Activated CD4-positive, alpha-beta T cell treated with anti-CD3 and anti-CD28 coated beads, Interleukin-2, amount 10 ng/mL, durations not matched to agents 24 days and 14 days (primary cell): ENCODE measurements at regions of chr2 and their contacts with region 1.

Region 1: DNA sequence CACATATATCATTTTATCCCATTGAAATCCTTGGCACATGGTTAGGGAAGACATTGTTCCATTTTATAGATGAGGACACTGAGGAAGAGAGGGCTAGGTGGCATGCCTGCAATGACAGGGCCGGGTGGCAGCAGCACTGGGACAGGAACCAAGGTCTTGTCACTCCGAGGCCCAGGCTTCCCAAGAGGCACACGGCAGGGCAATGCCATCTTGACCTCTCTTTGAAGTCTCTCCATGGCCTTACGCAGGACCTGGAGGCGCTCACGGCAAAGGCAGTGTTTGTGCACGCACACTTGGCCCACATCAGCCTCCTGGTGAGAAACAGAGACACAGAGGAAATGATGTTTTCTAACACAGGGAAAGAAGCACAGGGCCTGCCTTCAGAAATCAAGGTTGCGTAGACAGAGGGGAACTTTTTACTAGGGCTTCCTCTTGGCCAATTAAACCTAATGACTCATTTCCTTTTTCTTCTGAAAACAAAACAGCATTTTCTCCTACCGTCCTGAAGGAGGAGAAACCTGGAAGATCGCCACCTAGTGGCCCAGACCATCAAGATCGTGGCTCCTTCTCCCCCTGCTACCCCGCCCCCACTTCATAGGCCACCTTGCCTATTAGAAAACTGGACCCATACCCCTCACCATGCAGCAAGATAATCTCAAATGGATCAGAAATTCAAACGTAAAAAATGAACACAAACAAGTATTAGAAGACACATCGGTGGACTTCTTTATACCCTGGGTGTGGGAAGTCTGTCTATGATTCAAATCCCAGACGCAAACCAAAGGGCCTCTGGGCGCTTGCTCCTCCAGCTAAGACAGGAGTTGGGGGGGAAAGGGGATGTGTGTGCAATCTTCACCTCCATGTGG is 74.6 kb upstream of the SP3 start:
- DNase-seq: peak; percentile 94
- H3K4me3 Mint-ChIP-seq: peak overlapping the region; percentile 62
- H3K27ac Mint-ChIP-seq: peak overlapping the region; percentile 95
- H3K4me1 Mint-ChIP-seq: peaks cover 13% of the 10 kb centered on the region
- H3K27me3 Mint-ChIP-seq: no peaks in the 10 kb centered on the region

Region 2: GRCh38 chr2:173402405-173402974 is 637.3 kb before region 1 on chr2:
- intact Hi-C with region 1: loop called (anchors 2 kb)
- DNase-seq: peak; percentile 92
- H3K4me3 Mint-ChIP-seq: no peak overlapping the region
- H3K27ac Mint-ChIP-seq: no peak overlapping the region
- H3K4me1 Mint-ChIP-seq: peaks cover 5% of the 10 kb centered on the region
- H3K27me3 Mint-ChIP-seq: peaks cover 58% of the 10 kb centered on the region

Region 3: DNA sequence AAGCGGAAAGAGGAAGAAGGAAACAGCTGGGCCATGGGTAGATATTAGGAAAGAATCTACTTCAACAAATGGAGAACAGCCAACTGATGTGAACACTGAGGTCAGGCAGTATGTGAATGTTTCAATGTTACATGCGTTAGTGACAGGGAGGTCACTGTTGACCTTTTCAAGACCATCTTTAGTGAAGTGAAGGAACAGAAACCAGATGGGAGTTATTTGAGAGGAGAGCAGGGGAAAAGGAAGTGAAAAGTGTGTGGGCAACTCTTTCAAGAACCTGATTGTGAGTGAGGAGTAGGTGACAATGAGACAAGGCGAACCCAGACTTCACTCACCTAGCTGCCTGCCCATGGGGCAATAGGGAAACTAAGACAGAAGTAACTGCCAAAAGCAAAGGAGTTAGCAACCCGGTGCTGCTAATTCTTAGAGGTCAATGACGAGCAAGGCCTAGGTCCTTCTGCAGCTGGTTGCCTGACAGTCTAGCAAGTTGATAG is 141.6 kb before region 1 on chr2:
- intact Hi-C with region 1: loop called (anchors 10 kb)
- DNase-seq: no peak
- H3K4me3 Mint-ChIP-seq: no peak overlapping the region
- H3K27ac Mint-ChIP-seq: no peak overlapping the region
- H3K4me1 Mint-ChIP-seq: peaks cover 15% of the 10 kb centered on the region
- H3K27me3 Mint-ChIP-seq: no peaks in the 10 kb centered on the region

Region 4: DNA sequence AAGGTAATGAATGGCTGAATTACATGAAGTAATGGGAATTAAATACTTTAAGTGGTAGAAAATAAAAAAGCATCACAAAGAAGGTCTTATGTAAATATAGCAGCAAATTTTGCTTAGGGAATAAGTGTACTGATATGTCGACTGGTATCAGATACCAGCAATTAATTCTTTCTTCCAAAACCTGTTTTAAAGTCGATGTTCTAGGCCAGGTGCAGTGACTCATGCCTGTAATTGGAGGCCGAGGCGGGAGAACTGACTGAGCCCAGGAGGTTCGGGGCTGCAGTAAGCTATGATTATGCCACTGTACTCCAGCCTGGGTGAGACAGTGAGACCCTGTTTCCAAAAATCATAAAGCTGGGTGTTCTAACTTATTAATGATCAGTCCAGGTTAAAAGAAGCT is 104.9 kb before region 1 on chr2:
- intact Hi-C with region 1: no loop called
- DNase-seq: no peak
- H3K4me3 Mint-ChIP-seq: no peak overlapping the region
- H3K27ac Mint-ChIP-seq: no peak overlapping the region
- H3K4me1 Mint-ChIP-seq: peaks cover 15% of the 10 kb centered on the region
- H3K27me3 Mint-ChIP-seq: no peaks in the 10 kb centered on the region

Region 5: DNA sequence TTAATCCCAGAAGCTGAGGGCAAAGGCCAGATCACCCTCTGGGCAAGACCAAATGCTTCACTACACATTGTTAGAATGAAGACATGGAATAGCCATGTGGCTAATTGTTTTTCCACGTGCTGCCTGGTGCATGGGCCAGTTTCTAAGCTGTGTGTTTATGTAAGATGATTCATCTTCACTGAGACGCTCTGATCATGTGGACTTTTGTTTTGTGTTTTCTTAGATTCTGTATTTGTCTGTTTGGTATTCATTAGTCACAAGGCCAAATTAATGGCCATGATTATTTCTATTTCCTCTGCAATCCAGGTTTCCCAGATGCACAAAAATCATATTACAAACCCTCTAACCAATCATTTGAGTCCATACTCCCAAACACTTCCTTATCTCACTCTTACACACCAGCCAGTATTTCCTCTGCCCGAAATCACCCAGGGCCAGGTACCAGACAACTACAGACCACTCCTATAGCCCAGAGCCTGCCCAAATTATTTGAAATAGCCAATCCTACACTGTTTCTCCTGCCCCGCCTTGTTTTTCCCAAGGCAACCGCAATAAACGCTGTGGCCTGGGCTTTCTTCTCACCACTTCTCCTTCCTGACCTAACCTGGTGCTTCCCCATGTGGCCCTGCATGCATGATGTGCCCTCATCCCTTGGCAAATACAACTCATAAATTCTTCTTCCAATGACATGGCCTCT is 19.5 kb after region 1 on chr2:
- intact Hi-C with region 1: no loop called
- DNase-seq: peak; percentile 31
- H3K4me3 Mint-ChIP-seq: no peak overlapping the region
- H3K27ac Mint-ChIP-seq: no peak overlapping the region
- H3K4me1 Mint-ChIP-seq: no peaks in the 10 kb centered on the region
- H3K27me3 Mint-ChIP-seq: peaks cover 6% of the 10 kb centered on the region